Left colon (tissue), 2 donors: ENCODE measurements at regions of chr19 and their contacts with region 1.

Region 1: DNA sequence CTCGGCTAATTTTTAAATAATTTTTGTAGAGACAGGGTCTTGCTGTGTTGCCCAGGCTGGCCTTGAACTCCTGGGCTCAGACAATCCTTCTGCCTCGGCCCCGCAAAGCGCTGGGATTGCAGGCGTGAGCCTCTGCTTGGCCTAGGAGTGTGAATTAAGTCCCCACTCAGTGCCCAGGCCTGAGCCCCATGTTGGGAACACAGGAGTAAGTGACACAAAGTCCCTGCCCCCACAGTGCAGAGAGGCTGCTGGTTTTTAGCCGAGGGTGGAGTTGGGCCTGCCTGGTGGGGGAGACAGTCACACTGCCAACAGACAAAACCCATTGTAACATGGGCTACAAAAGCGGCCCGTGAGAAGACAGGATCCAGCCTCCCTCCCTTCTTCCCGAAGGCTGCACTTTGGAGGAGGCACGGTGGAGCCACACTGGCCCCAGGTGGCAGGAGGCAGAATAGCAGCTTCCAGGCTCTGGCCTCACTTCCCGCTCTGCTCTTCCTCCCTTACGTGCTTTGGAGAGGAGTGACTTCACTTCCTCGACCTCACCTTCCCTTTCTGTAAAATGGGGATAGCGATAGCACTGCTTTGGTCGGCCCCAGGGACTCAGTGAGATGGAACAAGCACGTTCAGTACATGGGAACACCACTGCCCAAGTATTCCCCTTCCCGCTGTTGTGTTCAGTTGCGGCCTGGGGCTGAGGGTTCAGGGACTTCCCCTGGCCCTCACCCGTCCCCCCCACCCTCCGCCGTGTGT is 15.2 kb upstream of the EHD2 start:
- DNase-seq: peak; percentile 71 to 75
- ATAC-seq: peak; percentile 94

Region 2: DNA sequence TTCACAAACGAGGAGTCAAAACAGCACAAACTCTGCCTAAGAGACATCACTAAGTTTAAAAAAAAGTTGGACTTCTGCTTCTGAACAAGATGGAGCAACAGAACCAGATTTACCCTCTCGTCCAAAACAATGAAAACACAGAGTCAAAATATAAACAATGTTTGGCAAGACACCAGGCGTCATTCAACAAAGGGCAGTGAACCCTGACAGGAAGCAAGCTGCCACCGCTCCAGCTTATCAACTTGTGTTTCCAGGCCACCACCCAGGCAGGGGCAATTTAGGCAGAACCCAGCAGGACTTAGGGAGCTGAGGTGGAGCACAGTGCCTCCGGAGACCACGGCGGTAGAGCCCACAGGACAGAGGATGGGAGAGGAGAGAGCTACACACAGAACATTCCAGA is 174.6 kb before region 1 on chr19:
- intact Hi-C with region 1: loop called in 1 of 2 experiments (anchors 5 kb)
- DNase-seq: peak in 1 of 2 donors; percentile 45
- ATAC-seq: peak; percentile 87